ENCODE measurements at regions of chr11 and their contacts with region 1.

Region 1: GRCh38 chr11:43852057-43852636 is 28.5 kb upstream of the ALKBH3 start:
- DNase-seq: peak; percentile 30 to 57 (median 52)
- H3K4me3 ChIP-seq: no peak overlapping the region
- H3K4me3 Mint-ChIP-seq: no peak overlapping the region
- H3K27ac ChIP-seq: no peak overlapping the region
- H3K27ac Mint-ChIP-seq: no peak overlapping the region
- H3K4me1 ChIP-seq: no peaks in the 10 kb centered on the region
- H3K4me1 Mint-ChIP-seq: peaks cover 5% of the 10 kb centered on the region
- H3K27me3 ChIP-seq: no peaks in the 10 kb centered on the region
- H3K27me3 Mint-ChIP-seq: no peaks in the 10 kb centered on the region
- CTCF ChIP-seq: peak; percentile 89

Region 2: DNA sequence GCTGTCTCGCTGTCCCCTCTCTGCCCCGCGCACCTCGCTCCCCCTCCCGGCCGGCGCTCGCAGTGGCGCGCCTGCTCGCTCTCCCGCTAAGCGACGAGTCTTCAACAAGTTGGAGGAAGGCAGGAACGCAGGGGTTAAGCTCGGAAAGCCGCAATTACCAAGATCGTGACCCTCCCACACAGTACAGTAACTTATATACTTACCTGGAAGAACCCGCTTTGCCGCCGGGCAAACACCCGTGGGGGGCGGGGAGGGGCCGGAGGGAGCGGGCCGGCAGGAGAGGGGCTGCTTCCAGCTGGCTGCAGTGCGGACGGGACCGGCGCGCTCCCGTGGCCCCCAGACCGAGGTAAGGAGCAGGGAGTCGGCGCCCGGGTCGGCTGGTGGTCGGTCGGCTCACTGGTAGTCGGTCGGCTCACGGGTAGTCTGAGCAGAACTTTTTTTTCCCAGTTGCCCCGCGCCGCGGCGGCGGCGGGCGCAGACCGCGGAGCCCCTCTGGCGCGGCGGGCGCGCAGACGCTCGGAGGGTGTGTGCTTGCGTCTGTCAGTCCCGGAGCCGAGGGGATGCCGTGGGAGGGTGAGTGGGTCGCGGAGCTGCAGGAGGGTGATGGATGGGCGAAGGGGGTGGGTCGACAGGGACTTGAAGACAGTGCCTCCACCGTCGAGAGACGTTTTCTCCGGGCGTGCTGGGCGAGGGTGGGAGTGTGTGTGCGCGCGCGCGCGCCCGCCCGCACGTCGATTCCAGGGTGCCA is 272.8 kb before region 1 on chr11:
- intact Hi-C with region 1: loop called in 1 of 2 experiments (anchors 5 kb)
- DNase-seq: no peak
- H3K4me3 ChIP-seq: peak overlapping the region in 1 of 3 experiments; percentile 64
- H3K4me3 Mint-ChIP-seq: peak overlapping the region; percentile 68 to 86
- H3K27ac ChIP-seq: no peak overlapping the region
- H3K27ac Mint-ChIP-seq: no peak overlapping the region
- H3K4me1 ChIP-seq: peaks cover 9 to 20% of the 10 kb centered on the region in 2 donors
- H3K4me1 Mint-ChIP-seq: peaks cover 43% of the 10 kb centered on the region
- H3K27me3 ChIP-seq: peaks cover 93 to 99% of the 10 kb centered on the region in 2 donors
- H3K27me3 Mint-ChIP-seq: peaks cover 98 to 99% (median 99%) of the 10 kb centered on the region in 3 donors
- CTCF ChIP-seq: no peak

Region 3: DNA sequence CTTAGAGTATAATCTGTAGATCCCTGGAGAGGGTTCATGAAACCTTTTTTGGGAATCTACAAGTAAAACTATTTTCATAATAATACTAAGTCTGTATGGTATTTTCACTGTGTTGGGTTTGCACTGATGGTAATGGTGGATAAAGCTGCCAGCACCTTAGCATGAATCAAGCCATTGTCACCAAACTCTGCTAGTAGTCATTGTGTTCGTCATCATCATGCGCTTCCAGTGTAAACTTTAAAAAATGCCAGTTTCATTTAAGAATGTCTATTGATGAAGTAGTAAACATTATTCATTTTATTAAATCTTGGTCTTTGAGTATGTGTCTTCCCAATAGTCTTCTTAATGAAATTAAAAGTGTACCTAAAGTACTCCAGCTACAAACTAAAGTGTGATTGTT is 43.5 kb after region 1 on chr11:
- intact Hi-C with region 1: no loop called
- DNase-seq: no peak
- H3K4me3 ChIP-seq: no peak overlapping the region
- H3K4me3 Mint-ChIP-seq: no peak overlapping the region
- H3K27ac ChIP-seq: no peak overlapping the region
- H3K27ac Mint-ChIP-seq: no peak overlapping the region
- H3K4me1 ChIP-seq: no peaks in the 10 kb centered on the region
- H3K4me1 Mint-ChIP-seq: no peaks in the 10 kb centered on the region
- H3K27me3 ChIP-seq: no peaks in the 10 kb centered on the region
- H3K27me3 Mint-ChIP-seq: peaks cover 0 to 2% (median 0%) of the 10 kb centered on the region in 3 donors
- CTCF ChIP-seq: no peak

Region 4: GRCh38 chr11:43962383-43963278 is 110.5 kb after region 1 on chr11:
- intact Hi-C with region 1: no loop called
- DNase-seq: no peak
- H3K4me3 ChIP-seq: no peak overlapping the region
- H3K4me3 Mint-ChIP-seq: no peak overlapping the region
- H3K27ac ChIP-seq: no peak overlapping the region
- H3K27ac Mint-ChIP-seq: no peak overlapping the region
- H3K4me1 ChIP-seq: peaks cover 0 to 4% of the 10 kb centered on the region in 2 donors
- H3K4me1 Mint-ChIP-seq: peaks cover 10% of the 10 kb centered on the region
- H3K27me3 ChIP-seq: no peaks in the 10 kb centered on the region
- H3K27me3 Mint-ChIP-seq: peaks cover 3 to 14% (median 9%) of the 10 kb centered on the region in 3 donors
- CTCF ChIP-seq: no peak